Activated CD4-positive, alpha-beta memory T cell treated with anti-CD3 and anti-CD28 coated beads for 36 hours (primary cell): ENCODE measurements at regions of chr4 and their contacts with region 1.

Region 1: DNA sequence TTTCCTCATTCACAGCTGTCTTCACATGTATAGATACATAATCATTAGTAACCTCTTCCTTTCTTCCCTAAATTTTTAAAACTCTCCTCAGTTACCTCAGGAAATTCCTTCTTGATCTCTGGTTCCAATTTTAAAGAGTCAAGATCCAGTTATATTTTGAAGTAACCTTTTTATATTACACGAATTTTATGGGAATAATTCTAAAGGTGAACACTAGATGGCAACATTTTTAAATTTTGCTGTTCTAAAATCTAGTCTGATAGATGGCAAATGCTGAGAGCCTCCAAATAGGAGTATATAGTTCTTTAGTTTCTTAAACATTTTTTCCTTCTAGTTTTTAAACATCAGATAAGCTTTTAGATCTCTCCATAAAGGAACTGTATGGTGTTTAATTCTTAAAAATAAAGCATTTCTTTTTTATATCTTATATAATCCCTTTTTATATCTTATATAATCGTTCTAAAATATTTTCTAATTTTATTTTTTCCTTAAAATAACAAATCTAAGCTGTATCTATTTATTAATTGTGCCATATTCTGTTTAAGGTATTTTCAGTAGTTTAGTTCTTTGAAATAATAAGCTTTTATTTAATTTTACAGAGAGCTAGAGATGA is 37.9 kb upstream of the PAPSS1 start:
- DNase-seq: no peak
- H3K4me3 Mint-ChIP-seq: no peak overlapping the region
- H3K27ac Mint-ChIP-seq: no peak overlapping the region
- H3K4me1 Mint-ChIP-seq: peaks cover 5% of the 10 kb centered on the region
- H3K27me3 Mint-ChIP-seq: peaks cover 5% of the 10 kb centered on the region

Region 2: GRCh38 chr4:107666134-107666533 is 91.8 kb before region 1 on chr4:
- CTCF ChIA-PET with region 1: no interaction called
- POLR2A ChIA-PET with region 1: no interaction called
- intact Hi-C with region 1: no loop called
- DNase-seq: no peak
- H3K4me3 Mint-ChIP-seq: no peak overlapping the region
- H3K27ac Mint-ChIP-seq: no peak overlapping the region
- H3K4me1 Mint-ChIP-seq: no peaks in the 10 kb centered on the region
- H3K27me3 Mint-ChIP-seq: no peaks in the 10 kb centered on the region

Region 3: DNA sequence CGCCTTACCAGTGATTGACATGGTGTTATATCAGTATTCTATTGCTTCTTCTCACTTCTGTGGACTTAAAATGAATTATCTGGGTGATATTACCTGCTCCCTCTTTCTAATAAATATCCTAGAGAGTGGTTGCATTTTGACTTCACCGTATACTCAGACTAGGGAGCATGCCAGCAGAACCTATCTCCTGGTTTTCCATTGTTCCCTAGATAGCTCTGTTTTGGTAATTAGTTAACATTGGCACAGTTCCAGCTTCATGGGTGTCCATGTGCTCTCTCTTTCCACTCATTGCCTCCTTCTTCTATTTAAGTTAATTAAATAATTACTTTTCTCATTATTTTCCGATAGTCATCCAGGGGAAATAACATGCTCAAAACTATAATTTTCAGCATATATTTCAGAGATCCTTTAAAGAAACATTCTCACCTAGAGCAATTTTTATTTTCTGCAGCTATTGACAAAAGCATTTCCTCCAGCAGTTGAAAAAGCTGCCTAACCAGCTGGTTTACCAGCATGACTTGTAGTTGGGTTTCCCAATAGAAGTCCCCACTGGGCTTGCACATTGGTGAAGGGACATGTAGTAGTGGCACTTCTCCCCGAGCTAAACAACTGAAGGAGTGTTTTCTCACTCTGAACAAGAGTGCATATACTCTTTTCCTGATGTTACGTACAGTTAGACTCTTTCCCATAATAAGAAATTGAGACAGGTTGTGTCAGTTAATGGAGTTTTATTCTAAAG is 10.1 kb before region 1 on chr4:
- CTCF ChIA-PET with region 1: interaction called, 17 read pairs
- POLR2A ChIA-PET with region 1: no interaction called
- intact Hi-C with region 1: no loop called
- DNase-seq: no peak
- H3K4me3 Mint-ChIP-seq: no peak overlapping the region
- H3K27ac Mint-ChIP-seq: no peak overlapping the region
- H3K4me1 Mint-ChIP-seq: peaks cover 4% of the 10 kb centered on the region
- H3K27me3 Mint-ChIP-seq: peaks cover 21% of the 10 kb centered on the region

Region 4: DNA sequence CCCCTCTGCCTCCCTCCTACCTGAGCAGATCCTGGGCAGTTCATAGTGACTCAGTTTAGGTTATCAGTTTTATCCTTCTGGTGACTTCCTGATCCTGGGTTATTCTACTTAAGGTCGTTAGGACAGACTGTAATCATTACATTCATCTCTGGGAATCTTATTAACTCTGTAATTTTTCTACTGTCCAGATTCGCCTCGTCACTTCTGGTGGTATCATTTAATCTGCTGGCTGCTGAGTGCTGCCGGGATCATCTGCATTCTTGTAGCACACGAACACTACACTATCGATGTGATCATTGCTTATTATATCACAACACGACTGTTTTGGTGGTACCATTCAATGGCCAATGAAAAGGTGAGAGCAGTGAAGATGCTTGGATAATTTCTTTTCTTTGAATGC is 150.4 kb after region 1 on chr4:
- CTCF ChIA-PET with region 1: interaction called, 42 read pairs
- POLR2A ChIA-PET with region 1: no interaction called
- intact Hi-C with region 1: loop called (anchors 1 kb)
- DNase-seq: no peak
- H3K4me3 Mint-ChIP-seq: no peak overlapping the region
- H3K27ac Mint-ChIP-seq: no peak overlapping the region
- H3K4me1 Mint-ChIP-seq: no peaks in the 10 kb centered on the region
- H3K27me3 Mint-ChIP-seq: peaks cover 2% of the 10 kb centered on the region

Region 5: GRCh38 chr4:107913281-107913899 is 155.4 kb after region 1 on chr4:
- CTCF ChIA-PET with region 1: interaction called, 42 read pairs
- POLR2A ChIA-PET with region 1: no interaction called
- intact Hi-C with region 1: loop called (anchors 1 kb)
- DNase-seq: no peak
- H3K4me3 Mint-ChIP-seq: no peak overlapping the region
- H3K27ac Mint-ChIP-seq: no peak overlapping the region
- H3K4me1 Mint-ChIP-seq: no peaks in the 10 kb centered on the region
- H3K27me3 Mint-ChIP-seq: peaks cover 1% of the 10 kb centered on the region

Region 6: DNA sequence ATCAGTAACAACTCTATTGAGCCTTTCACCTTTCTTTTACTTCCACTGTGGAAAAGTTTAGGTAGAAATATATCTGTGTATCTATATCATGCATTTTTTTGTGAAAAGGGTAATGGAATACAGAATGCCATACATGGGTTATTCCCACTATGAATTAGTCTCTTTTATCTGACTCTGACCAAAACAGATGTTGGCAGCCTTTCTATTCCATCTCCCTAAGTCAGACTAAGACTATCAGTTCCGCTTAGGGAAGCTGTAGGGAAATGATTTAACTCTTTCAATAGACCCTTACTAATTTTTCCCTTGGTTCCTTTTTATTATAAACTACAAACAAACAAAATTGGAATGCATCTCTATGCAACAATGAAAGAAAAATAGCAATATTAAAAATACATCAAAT is 503.1 kb after region 1 on chr4:
- CTCF ChIA-PET with region 1: no interaction called
- POLR2A ChIA-PET with region 1: no interaction called
- intact Hi-C with region 1: no loop called
- DNase-seq: no peak
- H3K4me3 Mint-ChIP-seq: no peak overlapping the region
- H3K27ac Mint-ChIP-seq: no peak overlapping the region
- H3K4me1 Mint-ChIP-seq: no peaks in the 10 kb centered on the region
- H3K27me3 Mint-ChIP-seq: no peaks in the 10 kb centered on the region